GM18951 (cell line): ENCODE measurements at regions of chr1 and their contacts with region 1.

Region 1: DNA sequence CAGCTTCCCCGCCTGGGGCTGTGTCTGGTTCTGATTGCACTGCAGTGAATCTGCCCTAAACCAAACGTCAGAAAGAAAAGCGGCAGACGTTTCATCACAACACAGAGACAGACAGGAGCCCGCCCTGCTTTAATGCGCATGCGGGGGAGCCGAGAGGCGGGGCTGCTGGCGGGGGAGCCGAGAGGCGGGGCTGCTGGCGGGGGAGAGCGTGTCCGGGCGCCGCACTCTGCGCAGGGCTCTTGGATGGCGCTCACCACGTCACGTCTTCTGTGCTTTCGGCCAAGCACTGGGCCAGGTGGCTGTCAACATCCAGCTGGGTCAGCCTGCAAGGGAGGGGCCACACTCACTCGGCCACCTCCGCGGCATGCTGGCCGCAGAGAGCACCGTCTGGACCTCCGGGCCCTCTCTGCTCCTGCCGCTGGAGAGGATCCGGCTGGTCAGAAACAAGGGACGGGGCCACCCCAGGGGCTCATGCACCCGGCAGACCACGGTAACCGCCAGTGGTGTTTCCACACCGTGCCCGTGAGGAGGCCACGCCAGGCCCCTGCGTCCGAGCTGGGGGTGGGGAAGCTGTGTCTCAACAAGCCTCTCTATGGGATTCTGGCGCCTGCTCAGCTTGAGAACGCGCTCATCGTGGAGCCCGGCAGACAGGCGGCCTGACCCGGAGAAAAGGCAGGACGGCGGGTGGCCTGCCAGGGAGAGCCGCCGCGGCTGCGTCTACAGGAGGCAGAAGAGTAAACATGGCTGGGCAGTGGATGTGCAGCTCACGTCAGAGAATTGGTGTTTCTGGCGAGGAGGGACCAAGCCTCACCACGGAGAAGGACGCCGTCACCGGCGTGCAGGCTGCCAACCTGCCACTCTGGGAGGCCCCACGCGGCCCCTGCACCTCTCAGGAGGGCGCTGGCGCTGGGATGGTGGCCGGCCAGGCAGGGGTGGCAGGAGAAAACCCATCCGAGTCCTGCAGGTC is 4.8 kb downstream of the FAAP20 start:
- POLR2A ChIP-seq: peak; percentile 31

Region 2: DNA sequence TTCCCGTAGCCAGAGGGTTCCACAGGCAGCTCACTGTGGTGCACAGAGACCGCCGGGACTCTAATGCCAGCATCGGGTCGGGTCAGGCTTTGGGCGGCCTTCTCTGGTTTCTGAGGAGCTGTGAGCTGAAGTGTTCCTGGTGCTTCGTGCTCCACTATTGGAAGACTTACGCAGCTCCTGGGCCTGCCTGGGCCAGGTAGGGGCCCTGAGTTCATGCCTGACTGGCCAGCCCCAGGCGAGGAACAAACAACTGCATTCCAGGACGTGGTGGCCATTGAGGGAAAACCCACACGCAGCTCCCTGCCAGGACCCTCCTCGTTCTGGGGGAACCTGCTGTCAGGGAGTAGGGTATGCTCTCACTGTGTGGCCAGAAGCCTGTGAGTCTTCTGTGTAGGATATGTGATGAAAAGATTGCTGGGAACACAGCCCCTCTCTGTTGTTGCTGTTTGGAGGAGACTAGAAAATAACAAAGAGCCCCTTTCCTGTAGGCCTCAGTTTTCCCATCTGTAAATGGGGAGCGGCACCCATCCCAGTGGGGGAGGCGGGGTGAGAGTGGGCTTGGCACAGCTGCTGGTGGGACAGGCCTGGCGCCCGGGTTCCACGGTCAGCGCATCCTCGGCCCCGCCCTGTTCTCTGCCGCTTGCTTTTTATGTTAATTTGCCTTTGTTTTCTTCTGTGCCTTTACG is 210.3 kb after region 1 on chr1:
- in situ Hi-C with region 1: loop called (anchors 5 kb)
- POLR2A ChIP-seq: no peak

Region 3: GRCh38 chr1:2628191-2628932 is 438.6 kb after region 1 on chr1:
- in situ Hi-C with region 1: no loop called
- POLR2A ChIP-seq: no peak